ENCODE measurements at regions of chr4 and their contacts with region 1.

Region 1: GRCh38 chr4:187065396-187065795 is 341.7 kb upstream of the FAT1 start:
- DNase-seq: no peak
- ATAC-seq: no peak
- H3K4me3 ChIP-seq: no peak overlapping the region
- H3K27ac ChIP-seq: no peak overlapping the region
- H3K4me1 ChIP-seq: no peaks in the 10 kb centered on the region
- H3K27me3 ChIP-seq: no peaks in the 10 kb centered on the region
- CTCF ChIP-seq: no peak
- POLR2A ChIP-seq: no peak
- RAD21 ChIP-seq: no peak

Region 2: DNA sequence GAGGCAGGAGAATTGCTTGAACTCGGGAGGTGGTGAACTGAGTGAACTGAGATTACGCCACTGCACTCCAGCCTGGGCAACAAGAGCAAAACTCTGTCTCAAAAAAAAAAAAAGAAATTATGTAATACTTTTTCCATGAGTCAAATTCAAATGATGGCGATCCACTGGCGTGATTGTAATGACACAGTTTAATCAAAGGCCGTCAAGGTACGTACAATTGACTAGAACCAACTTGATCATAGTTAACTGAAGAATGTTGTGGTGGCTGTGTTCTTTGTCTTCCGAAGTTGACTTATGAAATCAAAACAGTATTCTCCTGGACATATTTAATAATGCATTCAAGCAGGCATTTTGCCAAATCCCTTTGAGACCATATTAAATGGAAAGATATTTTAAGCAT is 23.1 kb before region 1 on chr4:
- CTCF ChIA-PET with region 1: no interaction called
- POLR2A ChIA-PET with region 1: no interaction called
- dilution Hi-C with region 1: no loop called
- in situ Hi-C with region 1: no loop called
- intact Hi-C with region 1: no loop called
- DNase-seq: no peak
- ATAC-seq: no peak
- H3K4me3 ChIP-seq: no peak overlapping the region
- H3K27ac ChIP-seq: no peak overlapping the region
- H3K4me1 ChIP-seq: no peaks in the 10 kb centered on the region
- H3K27me3 ChIP-seq: no peaks in the 10 kb centered on the region; the same call in 1 of the 2 replicates
- CTCF ChIP-seq: no peak
- POLR2A ChIP-seq: no peak
- RAD21 ChIP-seq: no peak

Region 3: DNA sequence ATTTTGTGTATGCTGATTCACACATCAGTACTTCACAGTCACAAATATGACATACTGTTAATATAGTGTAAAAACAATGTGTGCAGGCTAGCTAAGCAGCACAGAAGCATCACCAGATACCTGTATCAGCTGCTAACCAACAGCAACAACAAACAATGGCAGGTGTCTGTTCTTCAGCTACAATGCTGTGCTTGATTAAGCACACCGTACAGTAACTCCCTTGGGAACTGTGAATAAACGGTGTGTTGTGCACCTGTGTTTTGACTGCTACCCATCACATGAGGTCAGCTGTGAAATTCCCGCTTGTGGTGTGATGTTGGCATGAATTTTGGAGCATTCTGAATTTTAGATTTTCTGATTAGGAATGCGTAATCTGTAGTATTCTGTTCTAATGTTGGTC is 38.0 kb after region 1 on chr4:
- CTCF ChIA-PET with region 1: no interaction called
- POLR2A ChIA-PET with region 1: no interaction called
- dilution Hi-C with region 1: no loop called
- in situ Hi-C with region 1: no loop called
- intact Hi-C with region 1: no loop called
- DNase-seq: no peak
- ATAC-seq: no peak
- H3K4me3 ChIP-seq: no peak overlapping the region
- H3K27ac ChIP-seq: no peak overlapping the region
- H3K4me1 ChIP-seq: no peaks in the 10 kb centered on the region
- H3K27me3 ChIP-seq: no peaks in the 10 kb centered on the region
- CTCF ChIP-seq: no peak
- POLR2A ChIP-seq: no peak
- RAD21 ChIP-seq: no peak

Region 4: GRCh38 chr4:187283201-187283955 is 218.0 kb after region 1 on chr4:
- CTCF ChIA-PET with region 1: no interaction called
- POLR2A ChIA-PET with region 1: no interaction called
- dilution Hi-C with region 1: no loop called
- in situ Hi-C with region 1: no loop called
- intact Hi-C with region 1: no loop called
- DNase-seq: peak; percentile 46
- ATAC-seq: no peak
- H3K4me3 ChIP-seq: no peak overlapping the region
- H3K27ac ChIP-seq: no peak overlapping the region
- H3K4me1 ChIP-seq: peaks cover 7% of the 10 kb centered on the region
- H3K27me3 ChIP-seq: no peaks in the 10 kb centered on the region
- CTCF ChIP-seq: no peak
- POLR2A ChIP-seq: no peak
- RAD21 ChIP-seq: no peak

Region 5: GRCh38 chr4:187333151-187333550 is 267.8 kb after region 1 on chr4:
- CTCF ChIA-PET with region 1: no interaction called
- POLR2A ChIA-PET with region 1: interaction called, 26 read pairs
- dilution Hi-C with region 1: no loop called
- in situ Hi-C with region 1: no loop called
- intact Hi-C with region 1: no loop called
- DNase-seq: peak; percentile 22
- ATAC-seq: no peak
- H3K4me3 ChIP-seq: no peak overlapping the region
- H3K27ac ChIP-seq: no peak overlapping the region
- H3K4me1 ChIP-seq: no peaks in the 10 kb centered on the region
- H3K27me3 ChIP-seq: no peaks in the 10 kb centered on the region
- CTCF ChIP-seq: no peak
- POLR2A ChIP-seq: no peak
- RAD21 ChIP-seq: no peak